Prostate gland (tissue), 2 donors: ENCODE measurements at regions of chr10 and their contacts with region 1.

Region 1: DNA sequence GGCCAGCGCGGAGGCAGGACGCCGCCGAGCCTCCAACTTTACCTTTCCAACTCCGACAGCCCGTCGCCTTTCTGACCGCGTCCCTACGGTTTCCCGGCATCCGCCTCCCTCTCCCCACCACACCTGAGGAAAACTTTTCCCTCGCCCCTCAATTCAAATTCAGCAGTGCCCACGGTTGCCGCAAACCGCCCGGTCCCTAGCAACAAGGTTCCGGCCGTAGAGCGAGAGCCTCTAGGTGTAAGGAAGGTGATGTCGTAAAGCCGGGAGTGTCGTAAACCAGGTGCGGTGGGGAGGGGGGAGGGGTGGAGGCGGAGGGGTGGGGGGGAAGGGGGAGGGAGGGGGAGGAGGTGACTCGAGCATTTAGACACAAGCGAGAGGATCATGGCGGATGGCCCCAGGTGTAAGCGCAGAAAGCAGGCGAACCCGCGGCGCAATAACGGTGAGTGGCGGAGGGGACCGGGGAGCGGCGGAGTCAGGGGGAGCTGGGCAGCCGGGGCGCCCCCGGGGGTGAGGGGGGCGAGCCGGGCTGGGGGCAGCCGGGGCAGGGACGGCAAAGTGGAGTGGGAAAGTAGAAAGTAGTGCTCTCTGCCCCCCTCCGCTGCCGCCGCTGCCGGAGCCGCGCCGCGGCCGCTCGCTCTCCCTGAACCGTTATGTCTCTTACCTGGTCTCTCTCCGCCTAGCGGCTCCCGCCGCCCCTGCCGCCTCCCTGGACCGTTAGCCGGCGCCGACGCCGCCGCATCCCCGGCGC is at the start of gene ZEB1:
- DNase-seq: peak; percentile 90
- H3K4me3 ChIP-seq: peak within 1 kb of the TSS; percentile 60 to 81
- H3K27ac ChIP-seq: peak within 1 kb of the TSS; percentile 85 to 88
- H3K4me1 ChIP-seq: no peaks in the 10 kb centered on the region
- H3K27me3 ChIP-seq: no peaks in the 10 kb centered on the region
- CTCF ChIP-seq: peak in 2 of 4 experiments; percentile 51 to 69
- POLR2A ChIP-seq: no peak
- total RNA-seq, gene ZEB1: 15.0 to 28.2 TPM

Region 2: DNA sequence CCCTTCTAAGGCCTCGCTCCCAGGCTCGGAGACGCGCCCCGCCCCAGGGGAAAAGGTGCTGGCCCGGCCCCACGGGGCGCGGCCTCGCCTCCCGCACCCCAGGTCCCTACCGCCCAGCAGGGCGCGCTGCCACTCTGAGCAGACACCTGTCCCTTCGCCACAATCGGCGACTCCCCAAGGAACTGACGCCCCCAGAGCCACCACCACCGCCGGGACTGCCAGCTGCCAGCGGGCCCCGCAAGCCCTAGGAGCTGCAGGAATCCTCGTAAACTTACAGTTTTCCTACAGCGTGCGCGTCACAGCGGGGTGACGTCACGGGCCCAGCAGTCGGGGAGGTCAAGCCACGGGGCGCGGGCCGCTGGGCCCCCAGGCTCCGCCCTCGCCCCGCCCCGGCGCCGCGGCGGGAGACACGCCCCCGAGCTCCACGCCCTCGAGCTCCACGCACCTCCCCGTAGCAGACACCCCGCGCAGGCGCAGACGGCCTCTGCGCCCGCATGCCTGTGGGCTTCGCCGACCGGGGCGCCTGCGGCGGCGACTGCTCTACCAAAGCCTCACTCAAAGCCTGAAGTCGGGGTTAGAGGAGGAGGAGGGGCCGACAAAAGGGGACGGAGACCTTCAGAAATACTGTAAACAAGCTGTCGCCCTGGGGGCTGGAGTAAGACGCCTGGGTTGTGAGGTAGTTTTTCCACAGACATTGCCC is 287.3 kb before region 1 on chr10 and contains the start of gene ZNF438:
- intact Hi-C with region 1: loop called (anchors 1 kb)
- DNase-seq: peak; percentile 89
- H3K4me3 ChIP-seq: peak within 1 kb of the TSS; percentile 57 to 62
- H3K27ac ChIP-seq: peak within 1 kb of the TSS; percentile 97
- H3K4me1 ChIP-seq: no peaks in the 10 kb centered on the region
- H3K27me3 ChIP-seq: no peaks in the 10 kb centered on the region
- CTCF ChIP-seq: peak; percentile 31 to 80 (median 68)
- POLR2A ChIP-seq: peak; percentile 73
- total RNA-seq, gene ZNF438: 1.5 to 10.1 TPM

Region 3: DNA sequence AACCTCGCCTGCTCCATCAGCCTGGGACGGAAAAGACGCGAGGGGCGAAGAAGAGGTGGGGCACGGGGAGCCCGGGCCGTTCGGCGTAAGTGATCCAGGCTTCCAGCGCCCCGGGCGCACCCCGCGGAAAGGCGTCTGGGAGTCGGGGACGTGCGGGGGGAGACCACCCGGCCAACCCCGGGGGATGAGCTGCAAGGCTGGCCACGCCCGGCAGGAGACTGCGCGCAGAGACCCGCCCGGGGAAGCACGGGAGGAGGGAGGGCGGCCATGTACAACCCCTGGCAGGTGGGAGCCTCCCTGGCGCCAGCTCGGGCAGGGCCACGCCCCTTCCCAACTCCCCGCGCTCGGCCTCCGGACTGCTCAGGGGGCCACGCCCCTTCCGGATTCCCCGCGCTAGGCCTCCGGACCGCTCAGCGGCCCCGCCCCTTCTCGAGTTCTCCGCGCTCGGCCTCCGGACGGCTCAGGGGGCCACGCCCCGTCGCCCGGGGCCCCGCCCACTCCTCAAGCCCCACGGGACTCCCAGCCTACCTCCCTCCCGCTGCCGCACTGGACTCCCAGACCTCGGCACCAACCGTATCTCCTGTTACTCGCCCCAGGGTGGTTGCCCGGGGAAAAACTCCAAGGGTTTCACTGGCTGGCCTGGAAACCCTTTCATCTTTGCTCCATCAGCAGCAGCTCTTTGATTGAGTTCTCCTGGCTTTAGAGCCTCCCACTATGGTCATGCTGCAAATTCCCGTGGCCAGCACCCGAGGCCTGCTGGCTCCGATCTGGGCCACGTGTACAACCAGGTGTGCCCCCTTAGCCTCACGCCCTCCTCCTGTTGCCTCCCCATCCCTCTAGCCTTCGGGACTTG is 284.4 kb after region 1 on chr10:
- intact Hi-C with region 1: loop called (anchors 5 kb)
- DNase-seq: peak; percentile 95
- H3K4me3 ChIP-seq: peak overlapping the region; percentile 58 to 60
- H3K27ac ChIP-seq: peak overlapping the region; percentile 79 to 84
- H3K4me1 ChIP-seq: no peaks in the 10 kb centered on the region
- H3K27me3 ChIP-seq: no peaks in the 10 kb centered on the region
- CTCF ChIP-seq: peak in 2 of 4 experiments; percentile 26 to 39
- POLR2A ChIP-seq: peak; percentile 60